Activated CD8-positive, alpha-beta T cell treated with anti-CD3 and anti-CD28 coated beads for 36 hours (primary cell): ENCODE measurements at regions of chr9 and their contacts with region 1.

Region 1: GRCh38 chr9:121545875-121546423 is 46.3 kb upstream of the GGTA1 start:
- DNase-seq: peak; percentile 85
- ATAC-seq: peak; percentile 84
- H3K4me3 Mint-ChIP-seq: no peak overlapping the region
- H3K27ac Mint-ChIP-seq: no peak overlapping the region
- H3K4me1 Mint-ChIP-seq: no peaks in the 10 kb centered on the region
- H3K27me3 Mint-ChIP-seq: peaks cover 25% of the 10 kb centered on the region
- CTCF ChIP-seq: peak; percentile 83

Region 2: DNA sequence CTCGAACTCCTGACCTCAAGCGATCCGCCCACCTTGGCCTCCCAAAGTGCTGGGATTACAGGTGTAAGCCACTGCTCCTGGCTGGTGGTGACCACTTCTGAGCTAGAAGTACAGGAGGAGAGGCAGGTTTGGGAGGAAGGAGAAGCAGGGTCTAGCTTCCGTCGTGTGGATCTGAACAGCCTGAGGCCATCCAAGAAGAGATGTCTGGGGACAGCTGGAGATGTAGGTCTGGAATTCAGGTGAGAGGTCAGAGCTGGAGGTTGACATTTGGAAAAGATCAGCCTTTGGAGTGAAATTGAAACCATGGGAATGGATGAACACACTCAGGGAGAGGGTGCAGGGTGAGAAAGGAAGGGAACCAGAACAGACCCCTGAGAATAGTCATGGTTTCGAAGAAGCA is 13.1 kb before region 1 on chr9:
- CTCF ChIA-PET with region 1: interaction called, 10 read pairs
- POLR2A ChIA-PET with region 1: interaction called, 3 read pairs
- intact Hi-C with region 1: no loop called
- DNase-seq: no peak
- ATAC-seq: no peak
- H3K4me3 Mint-ChIP-seq: no peak overlapping the region
- H3K27ac Mint-ChIP-seq: no peak overlapping the region
- H3K4me1 Mint-ChIP-seq: no peaks in the 10 kb centered on the region
- H3K27me3 Mint-ChIP-seq: peaks cover 6% of the 10 kb centered on the region
- CTCF ChIP-seq: no peak

Region 3: DNA sequence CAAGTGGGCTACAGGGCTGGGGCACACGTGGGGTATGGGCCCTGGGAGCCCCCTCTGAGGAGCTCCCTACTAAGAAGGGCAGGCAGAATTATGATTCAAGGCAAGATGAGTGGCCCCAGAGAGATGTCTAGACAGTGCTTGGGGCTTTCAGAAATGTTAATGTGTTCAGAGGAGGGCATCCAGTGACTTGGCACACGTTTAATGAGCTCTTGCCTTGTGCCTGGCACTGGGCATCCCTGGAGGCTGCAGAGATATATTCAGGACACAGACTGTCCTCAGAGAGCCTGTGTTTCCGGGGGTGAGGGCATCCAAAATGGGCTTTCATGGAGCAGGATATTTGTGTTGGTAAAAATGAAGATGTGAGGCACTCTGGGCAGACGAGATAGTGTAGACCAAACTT is 80.1 kb after region 1 on chr9:
- CTCF ChIA-PET with region 1: no interaction called
- POLR2A ChIA-PET with region 1: no interaction called
- intact Hi-C with region 1: no loop called
- DNase-seq: no peak
- ATAC-seq: no peak
- H3K4me3 Mint-ChIP-seq: no peak overlapping the region
- H3K27ac Mint-ChIP-seq: no peak overlapping the region
- H3K4me1 Mint-ChIP-seq: no peaks in the 10 kb centered on the region
- H3K27me3 Mint-ChIP-seq: no peaks in the 10 kb centered on the region
- CTCF ChIP-seq: no peak

Region 4: DNA sequence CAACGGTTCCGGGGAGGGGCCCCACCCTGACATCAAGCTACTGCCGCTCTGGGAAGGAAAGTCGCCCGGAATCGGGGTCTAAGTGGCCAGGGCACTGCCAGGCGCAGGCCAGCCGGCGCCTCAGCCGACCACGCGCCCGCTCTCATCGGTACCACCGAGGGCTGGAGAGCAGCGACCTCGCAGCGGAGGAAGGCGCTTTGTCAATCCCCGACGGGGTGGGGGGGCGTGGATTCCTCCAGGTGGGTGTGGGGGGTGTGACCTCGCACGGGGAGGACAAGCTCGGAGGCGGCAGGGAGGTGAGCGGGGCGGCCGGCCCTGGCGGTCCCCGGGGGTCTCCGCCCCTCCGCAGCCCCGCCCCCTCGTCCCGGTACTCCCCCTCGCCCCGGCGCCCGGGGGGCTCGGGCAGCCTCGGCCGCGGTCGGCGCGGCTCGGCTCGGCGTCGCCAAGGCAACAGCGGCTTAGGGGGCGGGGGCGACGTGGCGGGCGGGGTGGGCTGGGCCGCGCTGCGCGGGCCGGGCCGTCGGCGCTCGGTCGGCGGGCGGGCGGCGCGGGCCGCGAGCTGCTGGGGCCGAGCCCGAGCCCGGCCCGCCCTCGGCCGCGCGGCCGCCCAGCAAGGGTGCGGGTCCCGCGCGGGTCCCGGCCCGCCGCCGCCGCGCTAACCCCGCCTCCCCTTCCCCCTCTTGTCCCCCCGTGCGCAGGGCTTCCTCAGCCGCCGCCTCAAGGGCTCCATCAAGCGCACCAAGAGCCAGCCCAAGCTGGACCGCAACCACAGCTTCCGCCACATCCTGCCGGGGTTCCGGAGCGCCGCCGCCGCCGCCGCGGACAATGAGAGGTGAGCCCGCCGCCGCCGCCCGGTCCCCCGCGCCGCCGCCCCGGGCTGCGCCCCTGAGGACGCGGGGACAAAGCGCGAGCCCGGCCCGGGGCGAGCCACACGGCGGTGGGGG is 152.9 kb after region 1 on chr9:
- CTCF ChIA-PET with region 1: interaction called, 10 read pairs
- POLR2A ChIA-PET with region 1: no interaction called
- intact Hi-C with region 1: no loop called
- DNase-seq: peak; percentile 74
- ATAC-seq: peak; percentile 70
- H3K4me3 Mint-ChIP-seq: peak overlapping the region; percentile 26
- H3K27ac Mint-ChIP-seq: no peak overlapping the region
- H3K4me1 Mint-ChIP-seq: peaks cover 5% of the 10 kb centered on the region
- H3K27me3 Mint-ChIP-seq: peaks cover 28% of the 10 kb centered on the region
- CTCF ChIP-seq: no peak

Region 5: GRCh38 chr9:121921444-121921843 is 375.5 kb after region 1 on chr9:
- CTCF ChIA-PET with region 1: no interaction called
- POLR2A ChIA-PET with region 1: no interaction called
- intact Hi-C with region 1: no loop called
- DNase-seq: no peak
- ATAC-seq: no peak
- H3K4me3 Mint-ChIP-seq: no peak overlapping the region
- H3K27ac Mint-ChIP-seq: no peak overlapping the region
- H3K4me1 Mint-ChIP-seq: no peaks in the 10 kb centered on the region
- H3K27me3 Mint-ChIP-seq: no peaks in the 10 kb centered on the region
- CTCF ChIP-seq: no peak